Right ventricle myocardium inferior (tissue), 1 donor: ENCODE measurements at regions of chr2 and their contacts with region 1.

Region 1: DNA sequence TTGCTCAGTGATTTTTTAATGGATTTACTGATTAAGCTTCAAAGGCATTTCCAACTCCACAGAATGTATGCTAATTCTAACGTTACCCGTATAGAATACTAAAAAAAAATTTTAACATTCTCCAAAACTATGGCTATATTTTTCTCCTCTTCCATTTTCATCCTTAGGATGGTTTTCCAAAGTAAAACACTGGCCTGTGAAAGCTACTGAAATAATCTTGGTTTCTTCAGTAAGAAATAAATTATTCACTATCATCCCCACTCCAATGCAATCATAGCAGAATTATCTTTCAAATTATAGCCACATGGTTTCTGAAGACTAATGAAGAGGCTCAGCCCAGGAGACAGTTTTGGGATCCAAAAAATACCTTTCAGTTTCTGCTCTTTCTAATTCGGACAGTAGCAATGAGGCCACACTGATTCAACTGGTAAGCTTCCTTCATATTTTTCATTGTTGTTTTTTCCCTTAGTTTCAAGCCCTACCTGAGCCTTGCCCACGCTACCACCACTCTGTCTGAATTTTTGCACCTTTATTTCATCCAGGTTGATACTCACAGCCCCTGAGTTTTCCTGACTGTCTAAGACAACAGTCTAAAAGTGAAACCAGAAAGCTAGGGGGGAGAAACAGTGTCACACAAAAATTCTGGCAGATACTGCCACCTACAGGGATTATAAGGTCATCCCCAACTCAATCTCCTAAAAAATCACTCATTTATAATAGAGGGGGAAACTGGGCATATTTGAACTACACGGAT is 887.9 kb downstream of the NRXN1 start:
- DNase-seq: no peak
- ATAC-seq: peak; percentile 74

Region 2: DNA sequence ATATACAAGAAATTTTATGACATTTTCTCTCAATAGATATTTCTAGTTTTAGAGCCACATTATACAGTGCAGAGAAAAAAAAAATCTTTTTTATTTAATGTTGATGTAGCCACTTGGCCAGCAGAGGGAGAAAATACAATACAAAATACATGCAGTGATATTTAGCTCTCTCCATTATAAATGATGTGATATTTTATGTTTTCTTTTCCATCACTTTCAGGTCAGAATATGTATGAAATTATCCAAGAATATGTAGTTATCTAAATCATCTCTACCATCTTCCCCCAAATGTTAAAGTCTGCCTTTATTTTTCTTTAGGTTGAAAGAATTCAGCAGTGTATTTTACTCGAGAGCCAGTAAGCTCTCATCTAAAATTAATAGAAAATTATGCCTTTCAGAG is 456.1 kb before region 1 on chr2:
- intact Hi-C with region 1: loop called (anchors 2 kb)
- DNase-seq: no peak
- ATAC-seq: no peak

Region 3: GRCh38 chr2:49770919-49771318 is 373.1 kb before region 1 on chr2:
- intact Hi-C with region 1: loop called (anchors 1 kb)
- DNase-seq: no peak
- ATAC-seq: peak; percentile 67

Region 4: DNA sequence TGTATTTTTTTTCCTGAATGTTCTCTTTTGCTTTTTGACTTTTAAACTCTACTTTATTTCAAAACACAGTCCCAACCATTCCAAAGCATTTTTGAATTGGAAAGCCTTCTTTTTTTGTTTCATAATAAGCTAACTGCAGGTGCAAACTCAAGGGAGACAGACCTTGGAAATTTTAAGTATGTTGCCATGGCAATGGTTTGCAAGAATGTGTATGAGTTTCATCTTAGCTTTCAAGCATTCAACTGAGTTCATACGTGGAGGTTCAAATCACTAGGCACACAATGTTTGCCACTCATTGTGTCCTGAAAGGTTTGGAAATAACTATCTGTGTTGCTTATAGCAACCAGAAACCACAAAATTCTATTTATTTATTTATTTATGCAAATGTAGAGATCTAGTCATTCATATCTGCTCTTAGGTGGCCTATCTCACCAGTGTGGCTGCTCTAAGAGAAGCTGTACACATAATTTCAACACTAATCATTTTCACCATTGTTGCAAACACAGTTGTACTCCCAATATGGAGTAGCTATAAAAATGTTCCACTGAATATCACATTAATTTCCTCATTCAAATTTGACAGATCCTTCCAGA is 183.9 kb before region 1 on chr2:
- intact Hi-C with region 1: no loop called
- DNase-seq: no peak
- ATAC-seq: no peak